Activated CD4-positive, alpha-beta T cell treated with anti-CD3 and anti-CD28 coated beads for 36 hours (primary cell): ENCODE measurements at regions of chr13 and their contacts with region 1.

Region 1: GRCh38 chr13:24020375-24020830 is 123.1 kb upstream of the C1QTNF9B start:
- DNase-seq: peak; percentile 61
- ATAC-seq: no peak
- H3K4me3 Mint-ChIP-seq: no peak overlapping the region
- H3K27ac Mint-ChIP-seq: no peak overlapping the region
- H3K4me1 Mint-ChIP-seq: no peaks in the 10 kb centered on the region
- H3K27me3 Mint-ChIP-seq: no peaks in the 10 kb centered on the region

Region 2: DNA sequence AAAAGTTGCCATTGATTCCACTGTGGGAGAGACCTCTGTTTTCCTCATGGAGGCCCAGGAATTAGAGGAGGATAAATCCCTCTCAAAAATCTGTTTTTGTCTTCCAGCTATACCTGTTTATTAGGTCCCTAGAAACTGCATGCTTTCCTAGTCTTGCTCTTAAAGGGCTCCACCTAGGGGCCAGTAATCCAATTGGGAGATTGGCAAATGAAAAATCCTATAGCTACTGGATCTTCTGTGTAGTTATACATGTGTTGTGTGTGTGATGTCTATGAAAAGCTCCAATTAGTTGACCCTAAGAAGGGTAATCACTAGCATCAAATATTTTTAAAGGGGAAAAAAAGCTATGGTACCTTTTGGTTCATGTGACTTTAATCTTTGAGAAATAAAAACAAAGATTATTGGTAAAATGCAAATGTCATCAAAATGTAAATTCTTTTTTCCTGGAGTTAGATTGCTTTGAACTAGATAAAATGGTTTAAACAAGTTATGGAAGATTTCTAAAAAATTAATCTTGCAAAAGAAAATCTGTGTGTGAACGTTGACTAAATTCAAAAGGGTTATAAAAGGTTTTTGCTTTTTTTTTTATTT is 59.7 kb before region 1 on chr13:
- CTCF ChIA-PET with region 1: interaction called, 3 read pairs
- POLR2A ChIA-PET with region 1: no interaction called
- intact Hi-C with region 1: loop called in 1 of 2 experiments (anchors 10 kb)
- DNase-seq: peak; percentile 16
- ATAC-seq: peak; percentile 34
- H3K4me3 Mint-ChIP-seq: no peak overlapping the region
- H3K27ac Mint-ChIP-seq: no peak overlapping the region
- H3K4me1 Mint-ChIP-seq: peaks cover 30% of the 10 kb centered on the region
- H3K27me3 Mint-ChIP-seq: no peaks in the 10 kb centered on the region

Region 3: GRCh38 chr13:24220086-24220703 is 199.8 kb after region 1 on chr13:
- CTCF ChIA-PET with region 1: interaction called, 28 read pairs
- POLR2A ChIA-PET with region 1: no interaction called
- intact Hi-C with region 1: loop called (anchors 1 kb)
- DNase-seq: peak; percentile 69
- ATAC-seq: peak; percentile 98
- H3K4me3 Mint-ChIP-seq: no peak overlapping the region
- H3K27ac Mint-ChIP-seq: no peak overlapping the region
- H3K4me1 Mint-ChIP-seq: peaks cover 29% of the 10 kb centered on the region
- H3K27me3 Mint-ChIP-seq: no peaks in the 10 kb centered on the region